Adrenal gland (tissue), 19 donors: ENCODE measurements at regions of chr9 and their contacts with region 1.

Region 1: GRCh38 chr9:107340920-107341632 is 58.0 kb downstream of the RAD23B start:
- DNase-seq: peak; percentile 71 to 89 (median 83)
- H3K4me3 ChIP-seq: no peak overlapping the region
- H3K27ac ChIP-seq: no peak overlapping the region
- H3K4me1 ChIP-seq: peaks cover 11 to 17% of the 10 kb centered on the region in 2 donors
- H3K27me3 ChIP-seq: no peaks in the 10 kb centered on the region
- CTCF ChIP-seq: peak; percentile 83 to 90 (median 88)
- POLR2A ChIP-seq: no peak

Region 2: DNA sequence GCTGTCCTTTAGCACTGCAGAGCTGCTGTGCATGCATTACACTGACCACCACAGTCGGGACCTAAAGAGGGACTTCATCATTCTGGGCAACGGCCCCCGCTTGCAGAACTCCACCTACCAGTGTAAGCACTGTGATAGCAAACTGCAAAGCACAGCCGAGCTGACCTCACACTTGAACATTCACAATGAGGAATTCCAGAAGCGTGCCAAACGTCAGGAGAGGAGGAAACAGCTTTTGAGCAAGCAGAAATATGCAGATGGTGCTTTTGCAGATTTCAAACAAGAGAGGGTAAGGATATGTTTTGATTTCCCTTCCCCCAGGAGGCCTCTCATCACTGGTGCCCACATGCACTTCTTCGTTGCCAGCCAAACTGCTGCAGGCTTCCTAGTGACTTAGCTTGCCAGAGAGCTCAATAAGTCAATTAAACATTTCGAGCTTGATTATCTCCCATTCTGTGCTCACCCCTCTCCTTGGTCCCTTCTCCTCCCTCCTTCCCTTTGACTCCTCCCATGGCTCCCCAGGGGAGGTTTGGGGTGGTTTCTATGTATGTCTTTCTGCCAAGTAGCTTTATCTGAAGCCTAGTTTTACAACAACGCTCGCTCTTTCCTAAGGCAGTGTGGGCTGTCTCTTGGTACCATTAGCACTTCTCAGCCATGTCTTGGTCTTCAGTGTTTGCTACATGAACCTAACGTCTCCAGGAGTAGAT is 411.5 kb before region 1 on chr9:
- intact Hi-C with region 1: no loop called
- DNase-seq: no peak
- H3K4me3 ChIP-seq: no peak overlapping the region
- H3K27ac ChIP-seq: peak overlapping the region in 1 of 5 donors; percentile 29
- H3K4me1 ChIP-seq: no peaks in the 10 kb centered on the region
- H3K27me3 ChIP-seq: no peaks in the 10 kb centered on the region
- CTCF ChIP-seq: no peak
- POLR2A ChIP-seq: no peak

Region 3: GRCh38 chr9:107243751-107244150 is 97.3 kb before region 1 on chr9:
- intact Hi-C with region 1: loop called (anchors 5 to 10 kb)
- DNase-seq: no peak
- H3K4me3 ChIP-seq: no peak overlapping the region
- H3K27ac ChIP-seq: no peak overlapping the region
- H3K4me1 ChIP-seq: no peaks in the 10 kb centered on the region
- H3K27me3 ChIP-seq: no peaks in the 10 kb centered on the region
- CTCF ChIP-seq: no peak
- POLR2A ChIP-seq: no peak

Region 4: GRCh38 chr9:107282753-107283625 is 58.1 kb before region 1 on chr9 and contains the start of gene RAD23B:
- intact Hi-C with region 1: loop called (anchors 10 kb)
- DNase-seq: peak; percentile 99
- H3K4me3 ChIP-seq: peak within 1 kb of the TSS; percentile 82 to 100 (median 94)
- H3K27ac ChIP-seq: peak within 1 kb of the TSS; percentile 98 to 100 (median 99)
- H3K4me1 ChIP-seq: peaks cover 18 to 39% of the 10 kb centered on the region in 2 donors
- H3K27me3 ChIP-seq: no peaks in the 10 kb centered on the region
- CTCF ChIP-seq: no peak
- POLR2A ChIP-seq: peak; percentile 81 to 88
- total RNA-seq, gene RAD23B: 50.1 to 145 (median 76.7) TPM